Vagina (tissue), 2 donors: ENCODE measurements at regions of chr2 and their contacts with region 1.

Region 1: GRCh38 chr2:190382851-190383250 is 25.3 kb upstream of the MFSD6 start:
- DNase-seq: no peak
- H3K4me3 ChIP-seq: no peak overlapping the region
- H3K27ac ChIP-seq: no peak overlapping the region
- H3K4me1 ChIP-seq: no peaks in the 10 kb centered on the region
- H3K27me3 ChIP-seq: no peaks in the 10 kb centered on the region
- CTCF ChIP-seq: peak; percentile 36 to 51 (median 50)
- POLR2A ChIP-seq: no peak

Region 2: GRCh38 chr2:190804182-190804795 is 421.4 kb after region 1 on chr2:
- intact Hi-C with region 1: loop called (anchors 5 kb)
- DNase-seq: no peak
- H3K4me3 ChIP-seq: no peak overlapping the region
- H3K27ac ChIP-seq: no peak overlapping the region
- H3K4me1 ChIP-seq: no peaks in the 10 kb centered on the region
- H3K27me3 ChIP-seq: no peaks in the 10 kb centered on the region
- CTCF ChIP-seq: peak; percentile 33 to 75 (median 45)
- POLR2A ChIP-seq: no peak